MCF 10A (cell line): ENCODE measurements at regions of chr2 and their contacts with region 1.

Region 1: DNA sequence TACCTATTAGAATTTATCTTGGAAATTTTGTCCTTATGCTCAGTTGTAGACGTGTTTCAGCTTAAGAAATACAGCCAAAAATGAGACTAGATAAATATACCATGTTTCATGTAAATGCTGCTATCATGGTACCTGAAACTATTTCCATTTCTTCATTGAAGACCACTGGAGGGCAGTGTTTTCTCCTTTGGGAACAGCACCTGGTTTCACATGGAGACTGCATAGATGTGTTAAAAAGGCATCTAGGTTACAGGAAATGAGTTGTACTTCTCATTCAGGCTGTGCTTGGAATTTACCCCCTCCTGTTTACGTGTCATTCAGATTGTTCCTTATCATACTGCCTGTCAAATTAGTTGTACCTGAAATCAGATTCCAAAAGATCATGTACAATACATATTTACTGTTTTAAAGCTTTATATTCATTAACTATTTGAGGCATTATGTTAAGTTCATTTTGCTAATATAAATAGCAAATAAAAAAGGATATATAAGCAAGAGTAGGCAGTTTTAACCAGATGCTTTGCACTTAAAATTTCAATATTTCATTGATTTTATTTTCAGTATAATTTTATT is 57.3 kb upstream of the PSMD14 start:
- DNase-seq: peak; percentile 75
- H3K4me3 Mint-ChIP-seq: no peak overlapping the region
- H3K27ac Mint-ChIP-seq: no peak overlapping the region
- H3K4me1 Mint-ChIP-seq: peaks cover 5% of the 10 kb centered on the region
- H3K27me3 Mint-ChIP-seq: peaks cover 11% of the 10 kb centered on the region
- CTCF ChIP-seq: peak; percentile 61

Region 2: GRCh38 chr2:161172901-161173540 is 77.9 kb before region 1 on chr2:
- CTCF ChIA-PET with region 1: no interaction called
- POLR2A ChIA-PET with region 1: no interaction called
- intact Hi-C with region 1: no loop called
- DNase-seq: no peak
- H3K4me3 Mint-ChIP-seq: no peak overlapping the region
- H3K27ac Mint-ChIP-seq: no peak overlapping the region
- H3K4me1 Mint-ChIP-seq: peaks cover 47% of the 10 kb centered on the region
- H3K27me3 Mint-ChIP-seq: no peaks in the 10 kb centered on the region
- CTCF ChIP-seq: no peak

Region 3: DNA sequence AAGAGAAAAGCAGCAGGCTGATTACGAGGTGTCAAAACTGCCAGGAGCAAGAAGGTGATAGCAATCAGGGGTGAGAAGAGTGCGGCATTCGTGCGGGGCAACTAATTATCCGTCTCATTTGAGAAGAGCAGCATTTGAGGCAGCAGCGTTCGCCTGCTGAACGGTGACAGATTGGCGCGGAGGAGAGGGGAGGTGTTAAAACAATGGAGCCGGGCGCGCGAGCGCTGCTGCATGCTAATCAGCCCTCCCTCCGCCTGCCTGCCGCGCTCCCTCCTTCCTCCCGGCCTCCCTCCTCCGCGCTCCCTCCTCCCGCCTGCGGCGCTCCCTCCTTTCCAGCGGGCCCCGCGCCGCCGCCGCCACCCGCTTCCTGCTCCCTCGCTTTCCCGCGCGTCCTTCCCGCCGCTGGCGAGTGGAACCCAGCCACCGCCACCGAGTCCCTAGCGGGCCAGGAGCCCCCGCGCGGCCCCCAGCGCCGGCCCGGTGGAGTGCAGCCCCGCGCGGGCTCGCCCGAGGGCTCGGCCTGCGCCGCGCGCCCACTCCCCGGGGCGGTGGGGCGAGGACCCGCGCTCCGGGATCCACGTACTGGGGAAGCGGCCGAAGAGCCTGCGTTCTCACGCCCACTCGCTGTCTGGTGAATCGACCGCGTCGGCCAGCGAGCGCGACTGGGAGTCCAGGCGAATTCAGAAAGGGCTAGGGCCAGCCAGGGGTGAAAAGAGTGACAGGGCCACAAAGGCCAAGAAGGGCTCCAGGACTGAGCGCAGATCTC is 12.2 kb before region 1 on chr2:
- CTCF ChIA-PET with region 1: interaction called, 22 read pairs
- POLR2A ChIA-PET with region 1: interaction called, 4 read pairs
- intact Hi-C with region 1: no loop called
- DNase-seq: peak; percentile 40
- H3K4me3 Mint-ChIP-seq: peak overlapping the region; percentile 71
- H3K27ac Mint-ChIP-seq: no peak overlapping the region
- H3K4me1 Mint-ChIP-seq: peaks cover 8% of the 10 kb centered on the region
- H3K27me3 Mint-ChIP-seq: no peaks in the 10 kb centered on the region
- CTCF ChIP-seq: no peak

Region 4: GRCh38 chr2:161265874-161266273 is 14.9 kb after region 1 on chr2:
- CTCF ChIA-PET with region 1: interaction called, 35 read pairs
- POLR2A ChIA-PET with region 1: interaction called, 4 read pairs
- intact Hi-C with region 1: no loop called
- DNase-seq: no peak
- H3K4me3 Mint-ChIP-seq: no peak overlapping the region
- H3K27ac Mint-ChIP-seq: no peak overlapping the region
- H3K4me1 Mint-ChIP-seq: no peaks in the 10 kb centered on the region
- H3K27me3 Mint-ChIP-seq: no peaks in the 10 kb centered on the region
- CTCF ChIP-seq: no peak

Region 5: GRCh38 chr2:161273038-161273760 is 22.2 kb after region 1 on chr2:
- CTCF ChIA-PET with region 1: interaction called, 35 read pairs
- POLR2A ChIA-PET with region 1: interaction called, 3 read pairs
- intact Hi-C with region 1: loop called (anchors 1 kb)
- DNase-seq: peak; percentile 65
- H3K4me3 Mint-ChIP-seq: no peak overlapping the region
- H3K27ac Mint-ChIP-seq: no peak overlapping the region
- H3K4me1 Mint-ChIP-seq: peaks cover 5% of the 10 kb centered on the region
- H3K27me3 Mint-ChIP-seq: no peaks in the 10 kb centered on the region
- CTCF ChIP-seq: peak; percentile 73

Region 6: GRCh38 chr2:161308178-161308955 is 57.4 kb after region 1 on chr2 and contains the start of gene PSMD14:
- CTCF ChIA-PET with region 1: interaction called, 4 read pairs
- POLR2A ChIA-PET with region 1: interaction called, 17 read pairs
- intact Hi-C with region 1: no loop called
- DNase-seq: peak; percentile 97
- H3K4me3 Mint-ChIP-seq: peak within 1 kb of the TSS; percentile 91
- H3K27ac Mint-ChIP-seq: peak within 1 kb of the TSS; percentile 97
- H3K4me1 Mint-ChIP-seq: peaks cover 14% of the 10 kb centered on the region
- H3K27me3 Mint-ChIP-seq: no peaks in the 10 kb centered on the region
- CTCF ChIP-seq: no peak
- total RNA-seq, gene PSMD14: 130 and 135 TPM in 2 replicates

Region 7: GRCh38 chr2:161556440-161556839 is 305.5 kb after region 1 on chr2:
- CTCF ChIA-PET with region 1: interaction called, 6 read pairs
- POLR2A ChIA-PET with region 1: no interaction called
- intact Hi-C with region 1: loop called (anchors 1 kb)
- DNase-seq: peak; percentile 11
- H3K4me3 Mint-ChIP-seq: no peak overlapping the region
- H3K27ac Mint-ChIP-seq: no peak overlapping the region
- H3K4me1 Mint-ChIP-seq: no peaks in the 10 kb centered on the region
- H3K27me3 Mint-ChIP-seq: peaks cover 26% of the 10 kb centered on the region
- CTCF ChIP-seq: no peak

Region 8: GRCh38 chr2:161946489-161947107 is 695.6 kb after region 1 on chr2:
- CTCF ChIA-PET with region 1: interaction called, 12 read pairs
- POLR2A ChIA-PET with region 1: no interaction called
- intact Hi-C with region 1: loop called (anchors 2 kb)
- DNase-seq: peak; percentile 40
- H3K4me3 Mint-ChIP-seq: no peak overlapping the region
- H3K27ac Mint-ChIP-seq: no peak overlapping the region
- H3K4me1 Mint-ChIP-seq: no peaks in the 10 kb centered on the region
- H3K27me3 Mint-ChIP-seq: peaks cover 71% of the 10 kb centered on the region
- CTCF ChIP-seq: peak; percentile 71